Heart right ventricle (tissue), 16 donors: ENCODE measurements at regions of chr22 and their contacts with region 1.

Region 1: DNA sequence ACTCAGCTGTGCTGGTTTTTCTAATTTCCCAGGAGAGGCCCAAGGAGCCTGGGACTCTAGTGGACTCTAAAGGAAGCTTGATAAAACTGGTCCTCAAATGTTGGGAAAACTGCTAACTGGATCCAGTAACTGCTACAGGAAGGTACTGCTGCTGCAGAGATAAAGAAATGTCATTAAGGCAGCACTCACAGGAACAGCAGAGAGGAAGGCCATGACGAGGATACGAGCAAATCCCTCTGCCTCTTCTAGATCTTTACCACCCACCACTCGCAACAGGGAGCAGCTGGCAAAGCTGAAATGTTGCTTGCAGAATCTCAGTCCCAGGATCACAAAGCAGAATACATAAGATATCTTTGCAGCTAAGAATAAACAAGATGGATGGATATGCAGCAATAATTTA is 23.5 kb downstream of the TTC28 start:
- DNase-seq: no peak
- ATAC-seq: no peak
- H3K4me3 ChIP-seq: no peak overlapping the region
- H3K27ac ChIP-seq: no peak overlapping the region
- H3K4me1 ChIP-seq: no peaks in the 10 kb centered on the region
- H3K27me3 ChIP-seq: peaks cover 0 to 5% (median 0%) of the 10 kb centered on the region in 7 donors
- CTCF ChIP-seq: no peak

Region 2: DNA sequence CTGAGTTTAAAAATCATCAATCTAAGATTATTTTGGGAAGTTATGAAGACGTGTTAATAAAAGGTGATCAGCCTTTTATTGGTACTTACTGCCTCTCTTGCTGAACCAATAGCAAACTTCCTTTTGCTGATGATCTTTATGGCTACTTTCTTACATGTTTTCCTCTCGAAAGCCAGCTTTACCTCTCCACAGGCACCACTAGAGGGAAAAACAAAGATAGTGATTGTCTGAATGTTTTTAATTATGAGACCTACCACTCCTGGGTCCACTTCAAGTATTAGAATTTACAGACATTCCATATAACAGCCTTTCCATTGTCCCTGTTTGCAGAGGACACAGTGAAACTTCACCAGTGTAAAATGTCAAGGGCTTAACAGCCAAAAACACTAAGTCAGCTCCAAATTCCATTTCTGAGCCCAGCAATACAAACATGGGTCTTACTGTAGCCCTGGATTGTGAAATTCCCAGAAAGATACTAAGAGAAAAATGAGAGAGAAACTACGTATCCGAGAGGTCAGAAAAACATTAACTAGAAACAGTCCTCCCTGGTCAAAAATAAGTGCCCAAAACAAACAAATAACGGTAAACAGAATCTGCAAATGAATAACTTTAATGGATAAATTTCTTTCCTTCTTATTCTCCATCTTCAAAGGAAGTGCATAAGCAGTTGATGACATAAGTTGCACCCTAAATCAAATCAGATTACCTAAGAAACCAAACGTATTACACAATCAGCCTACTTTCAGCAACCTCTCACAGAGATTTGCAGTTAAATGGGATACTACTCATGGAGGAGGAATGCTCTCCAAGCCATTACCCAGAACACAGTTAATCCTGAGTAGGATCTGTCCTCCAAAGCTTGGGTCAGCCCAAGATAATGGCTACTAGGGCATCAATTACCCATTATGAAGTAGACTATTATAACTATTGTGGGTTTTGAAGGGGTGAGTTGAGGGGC is 55.9 kb after region 1 on chr22:
- intact Hi-C with region 1: no loop called
- DNase-seq: no peak
- ATAC-seq: peak in 7 of 8 donors; percentile 23 to 90 (median 56)
- H3K4me3 ChIP-seq: peak overlapping the region in 3 of 10 donors; percentile 1 to 4 (median 3)
- H3K27ac ChIP-seq: peak overlapping the region in 9 of 10 donors; percentile 14 to 82 (median 65)
- H3K4me1 ChIP-seq: peaks cover 4 to 25% (median 20%) of the 10 kb centered on the region in 9 donors
- H3K27me3 ChIP-seq: no peaks in the 10 kb centered on the region
- CTCF ChIP-seq: no peak

Region 3: GRCh38 chr22:28734393-28734792 is 78.2 kb after region 1 on chr22:
- intact Hi-C with region 1: loop called in 1 of 10 experiments (anchors 5 kb)
- DNase-seq: no peak
- ATAC-seq: no peak
- H3K4me3 ChIP-seq: no peak overlapping the region
- H3K27ac ChIP-seq: no peak overlapping the region
- H3K4me1 ChIP-seq: no peaks in the 10 kb centered on the region
- H3K27me3 ChIP-seq: no peaks in the 10 kb centered on the region
- CTCF ChIP-seq: no peak